ENCODE measurements at regions of chr5 and their contacts with region 1.

Region 1: DNA sequence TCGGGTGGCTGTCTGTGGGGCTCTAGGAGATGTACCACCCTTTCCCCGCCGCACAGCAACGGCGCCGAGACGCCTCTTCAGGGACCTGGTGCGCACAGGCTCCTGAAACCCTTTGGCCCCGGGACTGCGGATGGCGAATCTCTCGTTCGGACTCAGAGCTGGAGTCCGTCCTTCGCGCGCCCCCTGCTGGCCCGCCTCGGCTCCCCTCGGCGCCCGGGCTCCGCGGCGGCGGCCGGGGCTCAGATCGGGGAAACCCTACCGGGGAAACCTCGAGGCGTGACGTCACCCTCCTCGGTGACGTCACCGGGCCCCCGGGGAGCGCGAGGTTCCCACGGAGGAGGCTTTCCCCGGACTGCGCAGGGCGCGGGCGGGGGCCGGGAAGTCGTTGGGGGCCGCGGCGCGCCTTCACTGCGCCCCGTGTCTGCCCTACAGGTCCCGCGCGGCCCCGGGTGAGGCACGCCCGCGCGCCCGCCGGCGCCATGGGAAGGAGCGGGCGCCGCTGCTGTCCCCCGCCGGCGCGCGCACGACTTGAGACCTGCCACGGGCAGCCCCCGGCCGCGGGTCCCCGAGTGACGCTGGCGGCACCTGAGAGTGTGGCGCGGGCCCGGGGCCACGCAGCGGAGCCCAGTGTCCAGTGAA is 7.9 kb downstream of the PRR7 start:
- DNase-seq: peak; percentile 96
- ATAC-seq: peak; percentile 69

Region 2: DNA sequence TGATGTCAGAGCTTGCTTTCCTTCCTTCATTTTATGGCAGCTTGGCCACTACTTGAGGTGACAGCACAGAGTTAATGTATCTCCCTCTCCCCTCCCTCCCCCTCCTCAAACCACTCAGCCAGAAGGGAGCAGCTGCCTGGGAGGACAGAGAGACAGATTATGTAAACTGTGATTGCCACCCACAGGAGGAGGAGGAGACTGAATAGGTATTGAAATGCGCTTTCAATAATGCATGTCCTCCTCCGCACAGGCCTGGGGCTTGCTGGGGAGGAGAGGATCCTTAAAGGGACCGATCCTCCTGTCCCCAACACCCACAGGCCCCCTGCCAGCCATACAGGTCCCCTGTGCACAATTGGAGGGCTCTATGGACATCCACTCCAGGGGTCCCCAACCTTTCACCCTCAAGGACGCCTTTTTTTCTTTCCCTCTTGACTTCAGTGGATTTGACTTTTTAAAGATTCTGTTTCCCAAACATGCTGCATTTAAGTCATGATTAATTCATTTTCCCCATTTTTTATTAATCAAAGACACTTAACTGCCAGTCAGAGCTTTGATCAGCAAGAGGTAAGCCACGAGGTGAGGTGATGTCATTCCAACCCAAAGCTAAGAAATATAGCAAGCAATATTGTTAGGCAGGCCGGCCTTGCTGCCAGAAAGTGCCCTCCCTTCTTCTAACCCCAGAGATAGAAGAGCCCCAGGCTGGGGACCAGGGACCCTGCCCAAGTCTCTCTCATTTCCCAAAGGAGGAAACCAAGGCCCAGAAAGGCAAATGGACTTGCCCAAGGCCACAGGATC is 1630.6 kb before region 1 on chr5:
- intact Hi-C with region 1: no loop called
- DNase-seq: no peak
- ATAC-seq: no peak

Region 3: DNA sequence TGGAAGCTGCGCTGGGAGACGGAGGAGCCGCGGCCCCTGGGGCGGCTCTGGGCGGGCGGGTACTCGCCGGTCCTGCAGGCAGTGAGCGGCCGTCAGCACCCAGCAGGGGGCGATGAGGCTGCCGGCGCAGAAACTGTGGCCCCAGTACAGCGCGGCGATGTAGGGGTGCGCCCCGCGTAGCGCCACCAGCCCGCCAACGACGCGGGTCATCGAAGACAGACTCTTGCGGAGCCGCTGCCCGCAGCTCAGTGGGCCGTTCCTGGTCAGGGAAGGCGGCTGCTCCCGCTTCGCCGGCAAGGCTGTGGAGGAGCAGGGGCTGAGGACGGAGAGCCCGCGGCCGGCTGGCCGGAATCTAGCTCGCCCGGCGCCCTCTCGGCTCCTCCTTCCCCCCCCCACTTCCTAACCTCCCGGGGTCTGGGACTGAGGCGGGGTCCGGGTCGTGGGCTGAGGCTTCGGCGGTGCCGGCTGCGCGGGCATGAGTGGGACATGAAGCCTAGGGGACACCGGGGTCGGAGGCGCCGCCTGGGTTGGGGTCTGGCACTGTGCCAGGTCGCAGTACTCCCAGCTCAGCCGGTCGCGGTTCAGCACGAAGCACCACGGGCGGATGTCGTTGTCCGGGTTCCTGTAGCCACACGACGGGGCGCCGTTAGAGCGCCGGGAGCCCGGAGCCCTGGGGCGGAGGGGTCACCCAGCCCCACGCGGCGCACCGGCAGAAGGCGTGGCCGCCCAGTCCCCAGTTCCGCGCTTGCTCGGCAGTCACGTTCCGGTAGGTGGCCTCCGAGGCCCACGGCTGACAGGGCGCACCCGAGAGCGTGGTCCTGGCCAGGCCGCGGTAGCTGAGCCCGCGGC is 50.5 kb before region 1 on chr5:
- intact Hi-C with region 1: loop called (anchors 5 kb)
- DNase-seq: peak; percentile 88
- ATAC-seq: peak; percentile 93

Region 4: DNA sequence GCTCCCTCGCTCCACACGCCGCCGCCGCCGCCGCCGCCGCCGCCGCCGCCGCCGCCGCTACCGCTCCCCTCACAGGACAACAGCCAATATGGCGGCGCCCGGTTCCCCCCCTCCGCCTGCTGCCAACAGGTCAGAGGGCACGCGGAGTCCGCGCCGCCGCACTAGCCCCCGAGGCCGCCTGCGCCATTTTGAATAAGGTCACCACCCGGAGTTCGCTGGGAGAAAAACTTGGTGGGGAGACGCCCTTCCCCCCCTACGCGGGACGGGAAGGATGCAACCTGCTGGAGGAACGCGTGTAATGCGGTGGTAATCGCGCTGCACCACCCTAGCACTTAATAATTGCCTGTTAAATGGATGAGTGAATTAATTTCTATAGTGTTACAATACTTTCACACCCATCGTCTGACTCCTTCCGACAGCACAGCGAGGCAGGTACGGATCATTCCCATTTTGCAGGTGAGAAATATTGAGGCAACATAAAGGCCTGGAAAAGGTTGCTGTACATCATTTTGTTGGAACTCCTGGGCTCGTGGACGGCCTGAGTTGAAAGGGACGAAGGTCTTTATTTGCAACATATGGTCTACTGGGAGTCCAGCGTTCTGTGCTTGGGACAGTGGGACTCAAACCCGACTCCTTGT is 100.1 kb after region 1 on chr5 and contains the start of gene FAM193B:
- intact Hi-C with region 1: no loop called
- DNase-seq: peak; percentile 96
- ATAC-seq: peak; percentile 98
- total RNA-seq, gene FAM193B: 113 TPM

Measured in sciatic nerve (tissue), 2 donors.